B cell (primary cell): ENCODE measurements at regions of chr9 and their contacts with region 1.

Region 1: DNA sequence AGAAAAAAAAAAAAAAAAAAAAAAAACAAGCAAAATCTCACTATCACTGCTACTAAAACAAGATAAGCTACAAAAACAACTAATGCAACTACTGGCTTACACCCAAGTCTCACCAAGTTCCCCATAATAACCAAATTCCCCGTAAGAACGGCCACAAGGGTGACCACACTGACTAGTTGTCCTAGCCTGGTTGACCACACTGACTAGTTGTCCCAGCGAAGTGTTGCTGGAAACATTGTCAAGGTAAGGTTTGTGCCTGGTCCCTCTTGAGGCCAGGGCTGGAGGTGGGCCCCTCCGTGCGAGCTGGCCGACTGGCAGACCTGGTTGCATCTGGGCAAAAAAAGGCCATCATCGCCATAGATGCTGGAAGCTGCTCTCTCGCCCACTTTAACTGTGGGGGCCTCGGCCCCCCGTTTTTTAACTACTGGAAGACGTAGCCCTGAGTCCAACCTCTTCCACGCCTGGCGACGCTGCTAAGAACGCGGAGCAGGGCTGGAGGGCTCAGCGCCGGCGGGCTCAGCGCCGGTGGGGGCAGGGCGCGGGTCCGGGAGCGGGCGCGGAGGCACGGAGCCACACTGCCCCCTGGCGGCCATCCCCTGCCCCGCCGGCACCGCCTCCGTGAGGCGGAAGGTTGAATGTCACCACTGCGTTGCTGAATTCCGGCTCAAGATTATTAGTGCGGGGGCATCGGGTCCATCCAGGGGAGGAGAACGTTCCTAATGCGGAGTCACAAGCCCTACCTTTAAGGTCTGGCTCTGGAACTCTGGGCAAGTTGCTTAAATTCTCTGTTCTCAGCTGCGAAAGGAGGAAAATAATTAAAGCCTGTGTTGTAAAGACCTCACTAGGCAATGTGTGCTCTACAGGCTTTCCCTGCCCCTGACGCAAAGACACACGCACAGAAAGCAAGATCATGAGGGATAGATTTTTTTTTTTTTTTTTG is 84.0 kb downstream of the HSD17B3 start:
- DNase-seq: peak; percentile 71
- ATAC-seq: peak; percentile 77
- H3K4me3 ChIP-seq: peak overlapping the region in 2 of 5 experiments; percentile 6
- H3K4me3 Mint-ChIP-seq: peak overlapping the region; percentile 55
- H3K27ac ChIP-seq: no peak overlapping the region
- H3K27ac Mint-ChIP-seq: no peak overlapping the region
- H3K4me1 ChIP-seq: peaks cover 10 to 14% of the 10 kb centered on the region in 2 donors
- H3K4me1 Mint-ChIP-seq: peaks cover 7% of the 10 kb centered on the region
- H3K27me3 ChIP-seq: peaks cover 0 to 38% (median 14%) of the 10 kb centered on the region in 4 experiments
- H3K27me3 Mint-ChIP-seq: peaks cover 57% of the 10 kb centered on the region
- CTCF ChIP-seq: peak; percentile 88

Region 2: GRCh38 chr9:95379630-95380029 is 838.4 kb before region 1 on chr9:
- CTCF ChIA-PET with region 1: interaction called, 7 read pairs
- POLR2A ChIA-PET with region 1: no interaction called
- intact Hi-C with region 1: loop called (anchors 5 kb)
- DNase-seq: peak; percentile 8
- ATAC-seq: no peak
- H3K4me3 ChIP-seq: no peak overlapping the region
- H3K4me3 Mint-ChIP-seq: no peak overlapping the region
- H3K27ac ChIP-seq: no peak overlapping the region
- H3K27ac Mint-ChIP-seq: no peak overlapping the region
- H3K4me1 ChIP-seq: no peaks in the 10 kb centered on the region
- H3K4me1 Mint-ChIP-seq: no peaks in the 10 kb centered on the region
- H3K27me3 ChIP-seq: peaks cover 0 to 9% (median 3%) of the 10 kb centered on the region in 4 experiments
- H3K27me3 Mint-ChIP-seq: peaks cover 58% of the 10 kb centered on the region
- CTCF ChIP-seq: peak; percentile 32

Region 3: GRCh38 chr9:95726756-95727155 is 491.3 kb before region 1 on chr9:
- CTCF ChIA-PET with region 1: no interaction called
- POLR2A ChIA-PET with region 1: no interaction called
- intact Hi-C with region 1: loop called (anchors 10 kb)
- DNase-seq: peak; percentile 11
- ATAC-seq: no peak
- H3K4me3 ChIP-seq: no peak overlapping the region
- H3K4me3 Mint-ChIP-seq: no peak overlapping the region
- H3K27ac ChIP-seq: no peak overlapping the region
- H3K27ac Mint-ChIP-seq: no peak overlapping the region
- H3K4me1 ChIP-seq: peaks cover 8 to 14% of the 10 kb centered on the region in 2 donors
- H3K4me1 Mint-ChIP-seq: peaks cover 13% of the 10 kb centered on the region
- H3K27me3 ChIP-seq: no peaks in the 10 kb centered on the region
- H3K27me3 Mint-ChIP-seq: peaks cover 4% of the 10 kb centered on the region
- CTCF ChIP-seq: peak; percentile 51

Region 4: DNA sequence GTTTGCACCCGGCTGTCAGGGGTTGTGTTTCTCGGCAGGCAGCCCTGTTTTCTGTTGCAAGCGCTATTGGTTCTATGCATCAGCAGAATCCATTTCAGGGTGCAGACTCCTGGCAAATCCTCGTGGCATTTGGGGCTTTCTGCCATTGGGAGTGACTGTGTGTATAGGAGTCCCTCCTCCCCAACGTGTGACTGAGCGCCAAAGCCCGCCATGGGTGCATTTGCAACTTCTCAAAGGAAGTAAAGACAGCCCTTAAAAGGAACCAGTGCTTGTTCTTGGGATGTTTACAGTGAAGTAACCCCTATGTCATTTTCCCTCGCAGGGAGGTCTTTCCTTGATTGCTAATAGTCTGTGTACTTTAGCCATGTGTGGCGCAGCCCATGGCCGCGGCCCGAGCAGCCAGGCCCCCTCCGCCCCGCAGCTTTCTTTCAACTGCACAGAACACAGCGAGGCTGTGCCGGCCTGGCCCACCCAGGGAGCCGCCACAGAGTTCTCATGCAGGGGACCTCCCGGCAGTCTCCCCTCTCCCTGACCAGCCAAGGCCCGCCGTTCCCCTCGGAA is 91.6 kb before region 1 on chr9:
- CTCF ChIA-PET with region 1: no interaction called
- POLR2A ChIA-PET with region 1: no interaction called
- intact Hi-C with region 1: no loop called
- DNase-seq: no peak
- ATAC-seq: no peak
- H3K4me3 ChIP-seq: no peak overlapping the region
- H3K4me3 Mint-ChIP-seq: no peak overlapping the region
- H3K27ac ChIP-seq: no peak overlapping the region
- H3K27ac Mint-ChIP-seq: no peak overlapping the region
- H3K4me1 ChIP-seq: no peaks in the 10 kb centered on the region
- H3K4me1 Mint-ChIP-seq: no peaks in the 10 kb centered on the region
- H3K27me3 ChIP-seq: no peaks in the 10 kb centered on the region
- H3K27me3 Mint-ChIP-seq: peaks cover 4% of the 10 kb centered on the region
- CTCF ChIP-seq: no peak

Region 5: DNA sequence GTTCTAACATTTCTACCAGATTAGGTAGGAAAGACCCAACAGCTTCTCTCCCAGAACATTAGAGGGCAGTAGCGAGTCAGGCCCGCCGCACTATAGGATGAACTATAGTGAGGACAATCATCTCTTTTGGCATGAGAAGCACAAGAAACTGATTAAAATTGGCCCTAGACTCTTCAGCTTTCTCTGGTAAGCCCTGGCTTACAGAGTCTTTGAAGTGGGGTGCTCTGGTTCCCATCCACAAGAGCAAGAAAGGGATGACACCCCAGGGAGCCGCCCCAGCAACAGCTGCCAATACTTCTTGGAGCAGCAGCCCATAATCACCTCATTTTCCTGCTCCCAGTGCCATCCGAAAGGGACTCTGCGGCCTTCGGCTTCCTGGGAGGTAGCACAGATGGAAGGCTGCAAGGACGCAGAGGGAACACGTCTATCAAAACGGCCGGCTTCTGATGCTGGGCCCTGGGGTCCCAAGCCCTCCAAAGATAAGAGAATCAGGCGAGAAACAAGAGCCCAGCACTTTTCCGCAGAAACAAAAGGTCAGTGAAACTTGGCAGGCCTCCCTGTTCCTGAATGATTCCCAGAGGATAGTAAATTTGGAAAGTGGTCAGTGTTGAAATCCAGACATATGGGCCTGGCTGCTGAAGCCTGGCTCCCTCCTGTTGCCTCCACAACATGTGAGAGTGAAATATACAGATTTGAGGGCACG is 14.7 kb after region 1 on chr9:
- CTCF ChIA-PET with region 1: interaction called, 12 read pairs
- POLR2A ChIA-PET with region 1: no interaction called
- intact Hi-C with region 1: no loop called
- DNase-seq: no peak
- ATAC-seq: no peak
- H3K4me3 ChIP-seq: no peak overlapping the region
- H3K4me3 Mint-ChIP-seq: no peak overlapping the region
- H3K27ac ChIP-seq: no peak overlapping the region
- H3K27ac Mint-ChIP-seq: no peak overlapping the region
- H3K4me1 ChIP-seq: no peaks in the 10 kb centered on the region
- H3K4me1 Mint-ChIP-seq: no peaks in the 10 kb centered on the region
- H3K27me3 ChIP-seq: peaks cover 0 to 8% (median 2%) of the 10 kb centered on the region in 4 experiments
- H3K27me3 Mint-ChIP-seq: peaks cover 30% of the 10 kb centered on the region
- CTCF ChIP-seq: peak; percentile 73

Region 6: GRCh38 chr9:96327694-96328352 is 109.8 kb after region 1 on chr9:
- CTCF ChIA-PET with region 1: no interaction called
- POLR2A ChIA-PET with region 1: no interaction called
- intact Hi-C with region 1: no loop called
- DNase-seq: peak; percentile 64
- ATAC-seq: peak; percentile 56
- H3K4me3 ChIP-seq: no peak overlapping the region
- H3K4me3 Mint-ChIP-seq: no peak overlapping the region
- H3K27ac ChIP-seq: no peak overlapping the region
- H3K27ac Mint-ChIP-seq: no peak overlapping the region
- H3K4me1 ChIP-seq: no peaks in the 10 kb centered on the region
- H3K4me1 Mint-ChIP-seq: no peaks in the 10 kb centered on the region
- H3K27me3 ChIP-seq: no peaks in the 10 kb centered on the region
- H3K27me3 Mint-ChIP-seq: no peaks in the 10 kb centered on the region
- CTCF ChIP-seq: peak; percentile 91